HepG2 (cell line): ENCODE measurements at regions of chr10 and their contacts with region 1.

Region 1: DNA sequence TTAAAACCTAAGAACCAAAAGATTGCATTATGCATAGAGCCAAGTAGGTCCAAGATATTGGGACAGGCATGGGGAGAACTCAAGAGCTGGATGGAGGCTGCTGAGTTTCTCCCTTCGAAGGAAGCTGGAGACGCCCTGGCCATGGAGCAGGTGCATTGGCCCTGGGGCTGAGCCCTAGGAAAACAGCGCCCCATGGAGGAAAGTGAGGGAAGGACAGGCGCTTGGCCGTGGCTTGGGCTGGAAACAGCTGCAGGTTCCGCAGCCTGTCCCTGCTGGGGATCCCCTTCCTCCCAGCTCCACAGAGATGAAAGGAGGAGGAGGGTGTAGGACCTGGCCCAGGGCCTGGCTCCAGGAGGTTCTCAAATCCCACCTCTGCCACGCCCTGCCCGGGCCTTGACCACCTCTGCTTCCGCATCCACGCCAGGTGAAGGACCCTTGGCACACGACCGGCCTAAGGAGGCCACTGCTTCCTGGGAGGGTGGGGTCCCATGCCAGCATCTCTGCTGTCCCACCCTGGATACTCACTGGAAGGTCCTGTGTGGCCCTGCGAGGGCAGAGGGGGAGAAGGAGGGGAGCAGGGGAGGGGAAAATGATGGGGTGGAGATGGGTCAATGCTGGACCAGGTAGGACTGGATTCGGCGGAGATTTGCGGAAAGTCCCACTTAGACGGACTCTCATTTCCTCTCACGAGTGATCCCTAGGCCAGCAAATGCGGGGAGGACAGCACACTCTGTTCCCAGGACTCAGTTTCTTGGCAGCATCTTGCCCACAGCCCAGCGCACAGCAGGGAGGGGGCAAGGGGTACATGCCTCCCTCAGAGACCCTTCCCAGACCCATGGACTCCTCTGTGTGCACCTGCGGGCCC is 258.6 kb upstream of the TCERG1L start:
- DNase-seq: no peak
- ATAC-seq: no peak
- H3K4me3 ChIP-seq: no peak overlapping the region
- H3K27ac ChIP-seq: no peak overlapping the region
- H3K4me1 ChIP-seq: no peaks in the 10 kb centered on the region
- H3K27me3 ChIP-seq: peaks cover 3 to 25% of the 10 kb centered on the region in 2 experiments; a peak in 3 of 5 replicates
- CTCF ChIP-seq: peak; percentile 20; the same call in 1 of the 2 replicates
- EP300 ChIP-seq: no peak
- POLR2A ChIP-seq: no peak
- RAD21 ChIP-seq: no peak

Region 2: GRCh38 chr10:131499566-131499965 is 70.5 kb before region 1 on chr10:
- CTCF ChIA-PET with region 1: no interaction called
- POLR2A ChIA-PET with region 1: no interaction called
- in situ Hi-C with region 1: no loop called
- intact Hi-C with region 1: loop called (anchors 2 kb)
- DNase-seq: no peak
- ATAC-seq: no peak
- H3K4me3 ChIP-seq: no peak overlapping the region
- H3K27ac ChIP-seq: no peak overlapping the region
- H3K4me1 ChIP-seq: no peaks in the 10 kb centered on the region
- H3K27me3 ChIP-seq: no peaks in the 10 kb centered on the region
- CTCF ChIP-seq: no peak
- EP300 ChIP-seq: no peak
- POLR2A ChIP-seq: no peak
- RAD21 ChIP-seq: no peak